OCI-LY7 (cell line): ENCODE measurements at regions of chr10 and their contacts with region 1.

Region 1: GRCh38 chr10:132387764-132388210 is 9.2 kb upstream of the PWWP2B start:
- DNase-seq: peak; percentile 81
- H3K4me3 ChIP-seq: peak overlapping the region; percentile 22
- H3K27ac ChIP-seq: no peak overlapping the region
- H3K4me1 ChIP-seq: peaks cover 5% of the 10 kb centered on the region
- CTCF ChIP-seq: peak; percentile 65

Region 2: DNA sequence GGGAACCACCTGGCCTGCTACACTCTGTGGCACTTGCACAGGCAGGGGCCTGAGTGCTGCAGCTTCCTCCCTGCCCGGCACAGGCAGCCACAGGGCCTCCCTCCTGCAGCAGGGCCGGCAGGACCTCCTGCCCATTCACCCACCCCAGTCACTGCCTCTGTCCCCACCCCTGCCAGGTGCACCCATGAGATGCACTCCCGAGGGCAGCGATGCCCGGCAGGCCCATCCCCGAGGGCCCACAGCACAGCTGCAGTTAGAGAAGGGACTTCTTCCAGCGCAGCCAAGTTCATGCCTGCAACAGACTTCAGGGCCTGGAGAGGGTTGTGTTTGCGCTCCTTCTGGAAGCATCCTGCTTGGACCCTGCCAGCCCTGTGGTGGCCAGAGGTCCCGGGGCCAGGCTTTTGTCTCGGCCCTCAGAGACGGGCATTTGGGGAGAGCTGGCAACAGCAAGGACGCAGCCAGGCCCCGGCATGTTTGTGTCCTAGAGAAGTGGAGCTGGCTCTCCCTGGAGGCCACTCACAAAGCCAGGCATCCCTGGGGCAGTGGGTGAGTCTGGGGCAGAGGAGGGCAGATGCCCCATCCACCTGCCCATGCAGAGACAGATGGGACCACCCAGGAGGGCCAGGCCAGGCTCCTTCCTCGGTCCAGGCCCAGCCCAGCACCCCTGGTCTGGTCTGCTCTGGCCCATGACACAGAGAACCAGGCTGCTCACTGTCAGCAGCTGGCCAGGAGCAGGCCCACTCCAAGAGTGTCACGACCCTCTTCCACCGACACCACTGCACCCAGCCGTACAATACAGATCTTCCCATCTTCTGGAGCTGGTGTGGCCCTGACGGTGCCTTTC is 50.6 kb after region 1 on chr10:
- CTCF ChIA-PET with region 1: no interaction called
- POLR2A ChIA-PET with region 1: no interaction called
- intact Hi-C with region 1: no loop called
- DNase-seq: no peak
- H3K4me3 ChIP-seq: no peak overlapping the region
- H3K27ac ChIP-seq: no peak overlapping the region
- H3K4me1 ChIP-seq: peaks cover 15% of the 10 kb centered on the region
- CTCF ChIP-seq: no peak

Region 3: GRCh38 chr10:132452631-132453469 is 65.1 kb after region 1 on chr10:
- CTCF ChIA-PET with region 1: interaction called, 4 read pairs
- POLR2A ChIA-PET with region 1: no interaction called
- intact Hi-C with region 1: loop called (anchors 1 kb)
- DNase-seq: peak; percentile 91
- H3K4me3 ChIP-seq: peak overlapping the region; percentile 35
- H3K27ac ChIP-seq: peak overlapping the region; percentile 10
- H3K4me1 ChIP-seq: peaks cover 26% of the 10 kb centered on the region
- CTCF ChIP-seq: peak; percentile 93

Region 4: GRCh38 chr10:132637477-132638129 is 249.8 kb after region 1 on chr10:
- CTCF ChIA-PET with region 1: no interaction called
- POLR2A ChIA-PET with region 1: no interaction called
- intact Hi-C with region 1: loop called (anchors 5 kb)
- DNase-seq: peak; percentile 69
- H3K4me3 ChIP-seq: no peak overlapping the region
- H3K27ac ChIP-seq: no peak overlapping the region
- H3K4me1 ChIP-seq: no peaks in the 10 kb centered on the region
- CTCF ChIP-seq: peak; percentile 91